ENCODE measurements at regions of chr5 and their contacts with region 1.

Region 1: DNA sequence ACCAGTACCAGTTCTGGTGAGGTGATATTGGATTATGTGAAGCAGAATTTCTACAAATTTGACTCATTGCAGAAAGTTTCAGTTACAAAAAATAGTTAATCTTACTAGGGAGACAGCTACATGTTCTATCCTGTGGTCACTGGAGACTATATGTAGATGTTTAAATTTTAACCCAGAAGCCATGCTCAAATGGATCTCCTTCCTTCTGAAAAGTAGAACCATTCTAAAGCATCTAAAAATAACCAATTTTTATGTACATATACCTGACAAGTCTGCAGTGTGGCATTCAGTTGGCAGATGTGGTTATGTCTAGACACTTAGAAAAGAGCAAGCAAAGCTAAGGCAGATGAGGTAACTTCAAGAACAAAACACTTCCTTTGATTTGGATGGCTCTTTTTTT is 65.5 kb upstream of the POU4F3 start:
- DNase-seq: no peak
- ATAC-seq: no peak
- H3K4me3 ChIP-seq: no peak overlapping the region
- H3K27ac ChIP-seq: no peak overlapping the region
- H3K4me1 ChIP-seq: no peaks in the 10 kb centered on the region
- H3K27me3 ChIP-seq: no peaks in the 10 kb centered on the region
- CTCF ChIP-seq: no peak
- POLR2A ChIP-seq: no peak

Region 2: DNA sequence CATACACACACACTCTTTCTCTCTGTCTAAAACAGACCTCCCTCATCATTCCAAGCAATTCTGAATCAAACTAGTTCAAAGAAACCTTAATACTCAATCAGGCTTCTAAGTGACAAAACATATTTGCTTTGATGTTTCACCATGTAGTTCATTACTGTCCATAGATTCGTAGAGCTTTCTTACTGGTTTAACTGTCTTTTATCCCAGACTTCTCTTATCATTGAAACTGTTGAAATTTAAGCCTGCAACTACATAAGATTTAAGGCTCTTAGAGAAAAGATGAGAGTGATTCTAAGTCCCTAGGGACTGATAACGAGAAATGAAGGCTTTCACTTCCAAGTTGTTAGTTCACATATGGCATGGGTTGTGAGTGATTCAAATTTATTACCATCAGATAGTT is 156.7 kb before region 1 on chr5:
- in situ Hi-C with region 1: no loop called
- intact Hi-C with region 1: no loop called
- DNase-seq: no peak
- ATAC-seq: no peak
- H3K4me3 ChIP-seq: no peak overlapping the region
- H3K27ac ChIP-seq: no peak overlapping the region
- H3K4me1 ChIP-seq: peaks cover 0 to 6% of the 10 kb centered on the region in 2 donors
- H3K27me3 ChIP-seq: no peaks in the 10 kb centered on the region
- CTCF ChIP-seq: no peak
- POLR2A ChIP-seq: no peak

Region 3: GRCh38 chr5:146137967-146138403 is 135.1 kb before region 1 on chr5:
- in situ Hi-C with region 1: loop called in 2 of 4 experiments (anchors 10 kb)
- intact Hi-C with region 1: no loop called
- DNase-seq: no peak
- ATAC-seq: no peak
- H3K4me3 ChIP-seq: no peak overlapping the region
- H3K27ac ChIP-seq: no peak overlapping the region
- H3K4me1 ChIP-seq: no peaks in the 10 kb centered on the region
- H3K27me3 ChIP-seq: no peaks in the 10 kb centered on the region
- CTCF ChIP-seq: no peak
- POLR2A ChIP-seq: no peak

Region 4: GRCh38 chr5:146165460-146165859 is 107.6 kb before region 1 on chr5:
- in situ Hi-C with region 1: loop called in 1 of 4 experiments (anchors 10 kb)
- intact Hi-C with region 1: no loop called
- DNase-seq: no peak
- ATAC-seq: no peak
- H3K4me3 ChIP-seq: no peak overlapping the region
- H3K27ac ChIP-seq: no peak overlapping the region
- H3K4me1 ChIP-seq: no peaks in the 10 kb centered on the region
- H3K27me3 ChIP-seq: no peaks in the 10 kb centered on the region
- CTCF ChIP-seq: no peak
- POLR2A ChIP-seq: no peak